ENCODE measurements at regions of chr17 and their contacts with region 1.

Region 1: DNA sequence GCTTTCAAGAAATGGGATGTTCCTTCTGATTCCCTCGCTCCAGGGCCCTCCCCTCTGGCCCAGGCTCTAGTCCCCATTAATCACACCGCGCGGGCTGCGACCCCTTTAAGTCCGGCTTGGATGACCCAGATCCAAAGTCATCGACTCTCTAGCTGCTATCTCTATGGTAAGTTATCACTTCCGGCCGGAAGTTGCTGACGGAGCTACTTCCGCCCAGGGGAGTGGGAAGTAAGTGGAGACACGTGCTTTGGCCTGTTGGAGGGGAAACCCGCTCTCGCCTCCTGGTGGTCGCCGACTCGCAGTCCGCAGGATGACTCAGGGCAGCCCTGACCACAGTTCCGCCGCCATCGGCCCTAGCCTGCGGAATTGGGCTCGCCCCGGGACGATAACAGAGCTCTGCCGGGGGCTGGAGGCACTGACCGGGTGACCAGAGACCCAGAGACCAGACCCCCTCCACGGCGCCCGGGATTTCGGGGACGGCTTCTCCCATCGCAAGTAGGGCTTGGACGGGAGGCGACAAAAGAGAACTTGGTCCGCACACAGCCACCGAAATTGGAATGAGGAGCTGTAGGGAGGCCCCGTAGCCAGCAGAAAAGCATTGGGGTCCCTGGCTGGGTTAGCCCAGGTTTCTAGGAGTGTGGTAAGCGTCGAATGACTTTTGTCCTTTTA is 52.2 kb upstream of the SEC14L1 start:
- DNase-seq: peak; percentile 99
- ATAC-seq: peak; percentile 96
- H3K4me3 ChIP-seq: peak overlapping the region; percentile 75 to 94 (median 86)
- H3K27ac ChIP-seq: peak overlapping the region; percentile 91
- H3K4me1 ChIP-seq: peaks cover 56% of the 10 kb centered on the region
- H3K27me3 ChIP-seq: no peaks in the 10 kb centered on the region; a peak in 1 of 5 replicates
- CTCF ChIP-seq: peak; percentile 99
- EP300 ChIP-seq: peak in 1 of 2 experiments; percentile 45; a peak in 1 of 4 replicates
- POLR2A ChIP-seq: peak; percentile 79 to 92
- RAD21 ChIP-seq: peak; percentile 88

Region 2: DNA sequence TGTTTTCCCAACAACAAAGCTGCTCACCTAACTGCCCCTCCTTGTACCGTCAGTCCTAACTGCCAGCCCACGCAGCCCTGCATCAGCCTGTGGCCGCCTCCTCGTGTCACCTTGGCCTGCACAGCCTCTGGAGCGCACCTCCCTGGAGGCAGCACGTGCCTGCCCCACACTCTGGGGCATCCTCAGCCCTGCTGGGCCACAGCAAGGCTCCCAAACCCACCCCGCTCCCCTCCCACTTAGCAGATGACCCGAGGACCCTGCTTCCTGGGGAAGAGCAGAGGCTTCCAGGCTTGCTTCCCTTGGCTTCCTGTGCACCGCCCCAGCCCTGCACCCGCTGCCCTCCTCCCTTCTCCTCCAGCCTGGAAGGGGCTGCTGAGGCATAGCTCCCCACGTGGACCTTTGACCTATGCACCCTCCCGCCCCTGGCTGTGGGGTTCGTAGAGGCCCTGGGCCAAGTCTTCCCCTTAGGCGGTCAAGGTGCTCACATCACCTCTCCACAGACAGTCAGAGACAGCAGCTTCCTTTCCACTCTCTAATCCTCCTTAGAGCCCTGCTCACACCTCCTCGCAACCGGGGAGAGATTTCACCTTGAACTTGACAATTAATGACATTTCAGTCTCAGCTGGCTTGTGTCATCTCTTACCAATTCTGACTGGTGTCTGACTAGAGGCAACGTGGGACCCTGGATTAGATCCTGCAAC is 105.4 kb before region 1 on chr17:
- CTCF ChIA-PET with region 1: no interaction called
- POLR2A ChIA-PET with region 1: no interaction called
- in situ Hi-C with region 1: no loop called
- intact Hi-C with region 1: no loop called
- DNase-seq: no peak
- ATAC-seq: peak; percentile 49
- H3K4me3 ChIP-seq: peak overlapping the region in 1 of 3 experiments; percentile 18; a peak in 1 of 6 replicates
- H3K27ac ChIP-seq: no peak overlapping the region
- H3K4me1 ChIP-seq: peaks cover 9% of the 10 kb centered on the region
- H3K27me3 ChIP-seq: peaks cover 6 to 36% of the 10 kb centered on the region in 2 experiments
- CTCF ChIP-seq: no peak
- EP300 ChIP-seq: no peak
- POLR2A ChIP-seq: no peak
- RAD21 ChIP-seq: no peak

Region 3: DNA sequence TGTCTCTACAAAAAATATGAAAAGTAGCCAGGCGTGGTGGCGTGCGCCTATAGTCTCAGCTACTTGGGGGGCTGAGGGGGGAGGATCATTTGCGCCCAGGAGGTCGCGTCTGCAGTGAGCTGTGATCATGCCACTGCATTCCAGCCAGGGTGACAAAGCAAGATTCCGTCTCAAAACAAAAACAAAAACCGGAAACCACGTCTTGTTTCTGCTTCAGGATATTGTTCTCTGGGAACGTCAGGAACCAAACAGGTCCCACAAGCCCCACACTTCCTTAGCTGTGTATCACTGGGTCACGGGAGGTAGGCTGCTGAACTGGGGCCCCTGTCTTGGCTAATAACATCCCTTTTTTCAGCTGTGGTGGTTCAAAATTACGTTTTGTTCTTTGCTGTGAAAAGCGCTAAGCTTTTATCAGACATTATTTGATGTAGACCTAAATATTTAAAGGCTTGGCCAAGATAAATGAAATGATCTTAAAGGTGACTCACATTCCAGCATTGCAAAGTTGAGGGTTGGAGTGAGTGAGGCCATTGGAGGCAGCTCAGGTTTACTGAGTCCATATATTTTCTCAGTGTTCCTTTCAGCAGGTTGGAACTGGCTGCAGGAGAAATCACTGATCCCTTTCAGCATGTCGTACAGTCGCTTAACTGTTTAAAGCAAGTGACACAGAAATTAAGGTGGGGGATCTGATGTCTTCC is 35.8 kb after region 1 on chr17:
- CTCF ChIA-PET with region 1: no interaction called
- POLR2A ChIA-PET with region 1: interaction called, 19 read pairs
- in situ Hi-C with region 1: no loop called
- intact Hi-C with region 1: no loop called
- DNase-seq: no peak
- ATAC-seq: no peak
- H3K4me3 ChIP-seq: no peak overlapping the region
- H3K27ac ChIP-seq: no peak overlapping the region
- H3K4me1 ChIP-seq: peaks cover 59% of the 10 kb centered on the region
- H3K27me3 ChIP-seq: no peaks in the 10 kb centered on the region
- CTCF ChIP-seq: no peak
- EP300 ChIP-seq: no peak
- POLR2A ChIP-seq: no peak
- RAD21 ChIP-seq: no peak

Region 4: GRCh38 chr17:77145612-77146245 is 57.1 kb after region 1 on chr17:
- CTCF ChIA-PET with region 1: no interaction called
- POLR2A ChIA-PET with region 1: interaction called, 35 read pairs
- in situ Hi-C with region 1: no loop called
- intact Hi-C with region 1: no loop called
- DNase-seq: peak; percentile 70
- ATAC-seq: peak; percentile 75
- H3K4me3 ChIP-seq: 0 out of 6 replicates have a peak overlapping the region, but pooled peaks of 1 of the 3 experiments have one; percentile 13
- H3K27ac ChIP-seq: peak overlapping the region; percentile 68
- H3K4me1 ChIP-seq: peaks cover 85% of the 10 kb centered on the region
- H3K27me3 ChIP-seq: no peaks in the 10 kb centered on the region; a peak in 1 of 5 replicates
- CTCF ChIP-seq: peak; percentile 54
- EP300 ChIP-seq: no peak; a peak in 1 of 4 replicates
- POLR2A ChIP-seq: no peak
- RAD21 ChIP-seq: 0 out of 2 replicates have a peak, but pooled peaks have one; percentile 46

Region 5: GRCh38 chr17:77214743-77215142 is 126.2 kb after region 1 on chr17:
- CTCF ChIA-PET with region 1: interaction called, 17 read pairs
- POLR2A ChIA-PET with region 1: interaction called, 25 read pairs
- in situ Hi-C with region 1: no loop called
- intact Hi-C with region 1: no loop called
- DNase-seq: peak; percentile 65
- ATAC-seq: peak; percentile 87
- H3K4me3 ChIP-seq: no peak overlapping the region
- H3K27ac ChIP-seq: no peak overlapping the region
- H3K4me1 ChIP-seq: peaks cover 5% of the 10 kb centered on the region
- H3K27me3 ChIP-seq: no peaks in the 10 kb centered on the region
- CTCF ChIP-seq: peak; percentile 84
- EP300 ChIP-seq: no peak
- POLR2A ChIP-seq: no peak
- RAD21 ChIP-seq: peak; percentile 82

Region 6: GRCh38 chr17:77254951-77255825 is 166.6 kb after region 1 on chr17:
- CTCF ChIA-PET with region 1: no interaction called
- POLR2A ChIA-PET with region 1: interaction called, 14 read pairs
- in situ Hi-C with region 1: no loop called
- intact Hi-C with region 1: no loop called
- DNase-seq: peak; percentile 73
- ATAC-seq: peak; percentile 85
- H3K4me3 ChIP-seq: peak overlapping the region; percentile 19 to 68 (median 38)
- H3K27ac ChIP-seq: no peak overlapping the region
- H3K4me1 ChIP-seq: peaks cover 32% of the 10 kb centered on the region
- H3K27me3 ChIP-seq: peaks cover 6 to 74% of the 10 kb centered on the region in 2 experiments; a peak in 4 of 5 replicates
- CTCF ChIP-seq: 0 out of 2 replicates have a peak, but pooled peaks have one; percentile 8
- EP300 ChIP-seq: peak; percentile 31 to 43; a peak in 2 of 4 replicates
- POLR2A ChIP-seq: no peak
- RAD21 ChIP-seq: peak; percentile 31

Measured in HepG2 (cell line).